Activated naive CD8-positive, alpha-beta T cell treated with anti-CD3 and anti-CD28 coated beads, Interleukin-2, amount 10 ng/mL, durations not matched to agents 7 days and 5 days (primary cell): ENCODE measurements at regions of chr11 and their contacts with region 1.

Region 1: GRCh38 chr11:119205574-119206510 is at the start of gene CBL:
- DNase-seq: peak; percentile 97
- ATAC-seq: peak; percentile 83
- H3K4me3 Mint-ChIP-seq: peak within 1 kb of the TSS; percentile 99
- H3K27ac Mint-ChIP-seq: peak within 1 kb of the TSS; percentile 90
- H3K4me1 Mint-ChIP-seq: peaks cover 14% of the 10 kb centered on the region
- H3K27me3 Mint-ChIP-seq: no peaks in the 10 kb centered on the region
- total RNA-seq, gene CBL: 45.1 to 45.2 TPM

Region 2: GRCh38 chr11:119262668-119263351 is 57.0 kb after region 1 on chr11:
- POLR2A ChIA-PET with region 1: interaction called, 29 read pairs
- DNase-seq: no peak
- ATAC-seq: peak; percentile 64
- H3K4me3 Mint-ChIP-seq: no peak overlapping the region
- H3K27ac Mint-ChIP-seq: no peak overlapping the region
- H3K4me1 Mint-ChIP-seq: peaks cover 47% of the 10 kb centered on the region
- H3K27me3 Mint-ChIP-seq: no peaks in the 10 kb centered on the region

Region 3: GRCh38 chr11:119282495-119282894 is 76.7 kb after region 1 on chr11:
- POLR2A ChIA-PET with region 1: interaction called, 13 read pairs
- DNase-seq: no peak
- ATAC-seq: no peak
- H3K4me3 Mint-ChIP-seq: no peak overlapping the region
- H3K27ac Mint-ChIP-seq: peak overlapping the region; percentile 31
- H3K4me1 Mint-ChIP-seq: peaks cover 26% of the 10 kb centered on the region
- H3K27me3 Mint-ChIP-seq: no peaks in the 10 kb centered on the region